Heart right ventricle (tissue), 16 donors: ENCODE measurements at regions of chr6 and their contacts with region 1.

Region 1: GRCh38 chr6:136289579-136290409 is at the start of gene BCLAF1:
- DNase-seq: peak; percentile 99 to 100
- ATAC-seq: peak; percentile 94 to 98 (median 96)
- H3K4me3 ChIP-seq: peak within 1 kb of the TSS; percentile 59 to 86 (median 83)
- H3K27ac ChIP-seq: peak within 1 kb of the TSS; percentile 91 to 99 (median 99)
- H3K4me1 ChIP-seq: peaks cover 0 to 52% (median 42%) of the 10 kb centered on the region in 9 donors
- H3K27me3 ChIP-seq: no peaks in the 10 kb centered on the region
- CTCF ChIP-seq: no peak
- total RNA-seq, gene BCLAF1: 62.8 to 102 (median 94.1) TPM

Region 2: GRCh38 chr6:135497412-135498269 is 792.2 kb before region 1 on chr6 and contains the start of gene AHI1:
- intact Hi-C with region 1: loop called in 3 of 10 experiments (anchors 2 to 10 kb)
- DNase-seq: peak; percentile 91 to 95
- ATAC-seq: peak; percentile 96 to 99 (median 96)
- H3K4me3 ChIP-seq: peak within 1 kb of the TSS; percentile 60 to 98 (median 80)
- H3K27ac ChIP-seq: peak within 1 kb of the TSS; percentile 83 to 98 (median 92)
- H3K4me1 ChIP-seq: peaks cover 0 to 24% (median 15%) of the 10 kb centered on the region in 9 donors
- H3K27me3 ChIP-seq: no peaks in the 10 kb centered on the region
- CTCF ChIP-seq: peak in 4 of 9 donors; percentile 14 to 44 (median 25)
- total RNA-seq, gene AHI1: 8.2 to 15.3 (median 11.9) TPM

Region 3: GRCh38 chr6:135951169-135951568 is 338.6 kb before region 1 on chr6:
- intact Hi-C with region 1: no loop called
- DNase-seq: no peak
- ATAC-seq: no peak
- H3K4me3 ChIP-seq: no peak overlapping the region
- H3K27ac ChIP-seq: no peak overlapping the region
- H3K4me1 ChIP-seq: peaks cover 0 to 10% (median 0%) of the 10 kb centered on the region in 9 donors
- H3K27me3 ChIP-seq: no peaks in the 10 kb centered on the region
- CTCF ChIP-seq: no peak

Region 4: GRCh38 chr6:136249811-136250685 is 39.7 kb before region 1 on chr6 and contains the start of gene MTFR2:
- intact Hi-C with region 1: loop called in 4 of 10 experiments (anchors 2 to 5 kb)
- DNase-seq: peak; percentile 88 to 99
- ATAC-seq: peak; percentile 98 to 100 (median 99)
- H3K4me3 ChIP-seq: peak within 1 kb of the TSS; percentile 44 to 77 (median 64)
- H3K27ac ChIP-seq: peak within 1 kb of the TSS in 8 of 10 donors; percentile 40 to 55 (median 44)
- H3K4me1 ChIP-seq: peaks cover 0 to 31% (median 16%) of the 10 kb centered on the region in 9 donors
- H3K27me3 ChIP-seq: no peaks in the 10 kb centered on the region
- CTCF ChIP-seq: no peak
- total RNA-seq, gene MTFR2: 0.20 to 0.69 (median 0.27) TPM in 4 of 10 donors, not detected in the others

Region 5: DNA sequence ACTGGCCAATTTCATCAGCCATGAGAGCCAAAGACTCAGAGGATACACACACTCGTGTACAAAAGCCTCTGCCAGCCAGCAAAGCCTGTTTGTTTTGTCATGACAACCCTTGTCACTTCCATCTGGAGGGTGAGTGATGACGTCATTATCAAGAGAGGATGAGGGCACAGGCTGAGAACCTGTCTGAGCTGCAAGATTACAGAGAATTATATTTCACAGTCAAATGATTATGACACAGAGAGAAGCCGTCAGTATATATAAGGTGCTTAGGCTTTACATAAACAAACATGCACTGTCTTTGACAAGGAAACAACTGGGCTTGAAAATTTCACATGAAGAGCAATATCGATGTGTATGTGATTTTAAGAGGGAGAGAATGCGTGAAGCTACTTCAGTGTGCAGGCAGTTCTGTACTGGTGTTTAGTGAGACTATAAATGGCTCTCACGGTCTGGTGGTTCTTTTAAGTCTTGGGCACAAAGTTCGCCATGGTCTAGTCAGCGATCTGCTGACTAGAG is 36.3 kb after region 1 on chr6:
- intact Hi-C with region 1: no loop called
- DNase-seq: no peak
- ATAC-seq: peak in 2 of 8 donors; percentile 21 to 29
- H3K4me3 ChIP-seq: no peak overlapping the region
- H3K27ac ChIP-seq: no peak overlapping the region
- H3K4me1 ChIP-seq: peaks cover 0 to 16% (median 4%) of the 10 kb centered on the region in 9 donors
- H3K27me3 ChIP-seq: peaks cover 0 to 9% (median 0%) of the 10 kb centered on the region in 7 donors
- CTCF ChIP-seq: no peak